ENCODE measurements at regions of chr5 and their contacts with region 1.

Region 1: GRCh38 chr5:161138751-161139455 is 286.9 kb upstream of the ATP10B start:
- DNase-seq: no peak
- ATAC-seq: no peak
- H3K4me3 ChIP-seq: no peak overlapping the region
- H3K4me3 Mint-ChIP-seq: peak overlapping the region; percentile 8
- H3K27ac ChIP-seq: no peak overlapping the region
- H3K27ac Mint-ChIP-seq: no peak overlapping the region
- H3K4me1 ChIP-seq: no peaks in the 10 kb centered on the region
- H3K4me1 Mint-ChIP-seq: peaks cover 1% of the 10 kb centered on the region
- H3K27me3 ChIP-seq: no peaks in the 10 kb centered on the region
- H3K27me3 Mint-ChIP-seq: no peaks in the 10 kb centered on the region
- CTCF ChIP-seq: no peak

Region 2: GRCh38 chr5:161176221-161176620 is 37.3 kb after region 1 on chr5:
- CTCF ChIA-PET with region 1: no interaction called
- POLR2A ChIA-PET with region 1: no interaction called
- intact Hi-C with region 1: no loop called
- DNase-seq: no peak
- ATAC-seq: no peak
- H3K4me3 ChIP-seq: no peak overlapping the region
- H3K4me3 Mint-ChIP-seq: no peak overlapping the region
- H3K27ac ChIP-seq: no peak overlapping the region
- H3K27ac Mint-ChIP-seq: no peak overlapping the region
- H3K4me1 ChIP-seq: no peaks in the 10 kb centered on the region
- H3K4me1 Mint-ChIP-seq: no peaks in the 10 kb centered on the region
- H3K27me3 ChIP-seq: no peaks in the 10 kb centered on the region
- H3K27me3 Mint-ChIP-seq: no peaks in the 10 kb centered on the region
- CTCF ChIP-seq: no peak

Region 3: DNA sequence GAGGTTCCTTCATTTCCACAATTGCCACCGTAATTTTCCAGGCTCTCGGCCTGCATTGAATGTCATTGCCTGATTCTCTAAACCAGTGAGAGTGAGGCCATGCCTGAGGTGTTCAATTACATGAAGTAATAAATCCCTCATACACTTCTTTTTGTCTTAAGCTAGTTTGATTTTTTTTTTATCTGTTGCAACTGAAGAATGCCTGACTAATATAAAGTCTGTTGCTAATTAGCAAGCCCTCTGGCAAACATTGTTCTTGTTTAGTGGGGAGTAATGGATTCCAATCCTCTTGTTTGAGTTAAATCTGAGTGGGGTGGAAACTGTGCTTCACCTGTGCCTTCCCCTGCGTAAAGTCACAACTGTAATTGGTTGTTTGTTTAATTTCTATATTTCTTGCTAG is 51.2 kb after region 1 on chr5:
- CTCF ChIA-PET with region 1: no interaction called
- POLR2A ChIA-PET with region 1: no interaction called
- intact Hi-C with region 1: no loop called
- DNase-seq: no peak
- ATAC-seq: no peak
- H3K4me3 ChIP-seq: no peak overlapping the region
- H3K4me3 Mint-ChIP-seq: no peak overlapping the region
- H3K27ac ChIP-seq: no peak overlapping the region
- H3K27ac Mint-ChIP-seq: no peak overlapping the region
- H3K4me1 ChIP-seq: no peaks in the 10 kb centered on the region
- H3K4me1 Mint-ChIP-seq: no peaks in the 10 kb centered on the region
- H3K27me3 ChIP-seq: no peaks in the 10 kb centered on the region
- H3K27me3 Mint-ChIP-seq: no peaks in the 10 kb centered on the region
- CTCF ChIP-seq: no peak

Region 4: GRCh38 chr5:162128117-162128516 is 989.2 kb after region 1 on chr5:
- CTCF ChIA-PET with region 1: no interaction called
- POLR2A ChIA-PET with region 1: no interaction called
- intact Hi-C with region 1: loop called (anchors 10 kb)
- DNase-seq: no peak
- ATAC-seq: no peak
- H3K4me3 ChIP-seq: no peak overlapping the region
- H3K4me3 Mint-ChIP-seq: no peak overlapping the region
- H3K27ac ChIP-seq: no peak overlapping the region
- H3K27ac Mint-ChIP-seq: no peak overlapping the region
- H3K4me1 ChIP-seq: no peaks in the 10 kb centered on the region
- H3K4me1 Mint-ChIP-seq: no peaks in the 10 kb centered on the region
- H3K27me3 ChIP-seq: no peaks in the 10 kb centered on the region
- H3K27me3 Mint-ChIP-seq: no peaks in the 10 kb centered on the region
- CTCF ChIP-seq: no peak

Measured in B cell (primary cell).